ENCODE measurements at regions of chr4 and their contacts with region 1.

Region 1: DNA sequence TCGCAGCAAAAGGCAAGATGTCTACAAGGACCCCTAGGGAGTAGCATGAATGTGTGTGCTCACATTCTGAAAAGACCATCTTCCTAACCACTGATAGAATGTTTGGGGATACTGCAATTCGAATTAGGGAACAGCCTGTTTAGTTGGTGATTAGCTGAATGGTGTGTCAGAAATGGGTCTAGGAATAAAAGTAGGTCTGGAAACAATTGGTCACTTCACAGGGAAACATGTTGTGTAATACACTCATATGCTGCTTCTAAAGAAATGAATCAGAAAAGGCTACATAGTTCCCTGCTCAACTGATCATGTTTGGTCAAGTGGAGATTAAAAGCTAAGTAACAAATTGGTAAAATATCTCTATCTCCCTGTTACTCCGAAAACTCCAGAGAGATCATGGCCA is 2362.4 kb upstream of the TENM3 start:
- DNase-seq: no peak
- H3K4me3 ChIP-seq: no peak overlapping the region
- CTCF ChIP-seq: no peak
- POLR2A ChIP-seq: no peak

Region 2: GRCh38 chr4:179855469-179855868 is 25.3 kb before region 1 on chr4:
- intact Hi-C with region 1: loop called (anchors 1 kb)
- DNase-seq: no peak
- H3K4me3 ChIP-seq: no peak overlapping the region
- CTCF ChIP-seq: no peak
- POLR2A ChIP-seq: no peak

Region 3: GRCh38 chr4:179919587-179919986 is 38.8 kb after region 1 on chr4:
- intact Hi-C with region 1: no loop called
- DNase-seq: no peak
- H3K4me3 ChIP-seq: no peak overlapping the region
- CTCF ChIP-seq: no peak
- POLR2A ChIP-seq: no peak

Region 4: DNA sequence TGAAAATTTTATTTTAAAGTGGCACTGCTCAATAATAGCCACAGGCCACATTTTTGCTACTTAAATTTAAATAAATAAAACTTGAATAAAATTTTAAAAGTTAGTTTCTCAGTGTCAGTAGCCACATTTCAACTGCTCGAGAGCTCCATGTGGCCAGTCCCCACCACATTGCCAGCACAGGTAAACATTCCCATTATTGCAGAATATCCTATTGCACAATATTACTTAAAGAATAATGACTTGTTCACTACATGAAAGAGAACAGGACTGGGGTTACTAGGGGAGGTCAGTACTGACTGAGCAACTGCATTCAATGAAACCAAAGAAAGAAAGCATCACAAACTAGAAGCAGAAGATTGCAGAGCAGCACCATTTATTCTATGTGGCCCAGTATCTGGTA is 160.8 kb after region 1 on chr4:
- intact Hi-C with region 1: no loop called
- DNase-seq: no peak
- H3K4me3 ChIP-seq: no peak overlapping the region
- CTCF ChIP-seq: no peak
- POLR2A ChIP-seq: no peak

Measured in lower leg skin (tissue), 4 donors.